B cell (primary cell): ENCODE measurements at regions of chr1 and their contacts with region 1.

Region 1: DNA sequence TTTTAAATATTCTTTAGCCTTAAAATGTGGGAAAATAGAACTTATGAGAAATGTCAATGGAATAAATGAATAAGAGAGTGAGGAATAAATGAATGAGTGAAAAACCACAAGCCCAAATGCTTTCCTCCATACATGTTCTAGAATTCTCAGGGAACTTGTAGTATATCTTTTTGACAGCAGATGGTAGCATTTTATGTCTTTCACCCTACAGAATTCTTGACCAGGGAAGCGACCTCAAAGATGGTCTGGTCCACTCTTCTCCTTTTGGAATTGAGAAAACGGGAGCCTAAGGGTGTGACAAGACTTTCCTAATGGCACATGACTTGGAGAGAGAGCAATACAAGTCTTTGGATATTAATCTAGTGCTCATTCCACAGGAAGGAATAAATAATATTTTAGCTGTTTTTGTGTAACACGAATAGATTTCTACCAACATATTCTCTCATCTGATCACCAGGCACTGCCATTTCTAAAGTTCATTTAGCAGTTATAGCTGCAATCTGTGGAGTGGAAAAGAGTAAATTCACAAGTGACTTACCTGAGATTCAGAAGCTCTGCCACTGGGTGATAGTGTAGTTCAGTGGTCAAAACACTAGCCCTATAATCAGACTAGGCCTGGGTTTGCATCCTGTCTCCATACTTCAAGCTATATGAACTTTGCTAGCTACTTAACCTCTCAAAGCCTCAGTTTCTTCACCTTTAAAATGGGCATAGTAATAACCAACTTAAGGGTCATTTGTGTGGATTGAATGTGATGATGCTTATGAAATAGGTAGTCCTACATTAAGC is 15.0 kb upstream of the F5 start:
- DNase-seq: peak; percentile 61
- ATAC-seq: no peak
- H3K4me3 ChIP-seq: no peak overlapping the region
- H3K4me3 Mint-ChIP-seq: peak overlapping the region; percentile 20
- H3K27ac ChIP-seq: peak overlapping the region in 1 of 2 donors; percentile 62
- H3K27ac Mint-ChIP-seq: peak overlapping the region; percentile 77
- H3K4me1 ChIP-seq: peaks cover 39 to 40% of the 10 kb centered on the region in 2 donors
- H3K4me1 Mint-ChIP-seq: peaks cover 42% of the 10 kb centered on the region
- H3K27me3 ChIP-seq: no peaks in the 10 kb centered on the region
- H3K27me3 Mint-ChIP-seq: no peaks in the 10 kb centered on the region
- CTCF ChIP-seq: peak; percentile 70

Region 2: GRCh38 chr1:169517586-169518192 is 83.6 kb before region 1 on chr1:
- CTCF ChIA-PET with region 1: no interaction called
- POLR2A ChIA-PET with region 1: no interaction called
- intact Hi-C with region 1: no loop called
- DNase-seq: no peak
- ATAC-seq: no peak
- H3K4me3 ChIP-seq: no peak overlapping the region
- H3K4me3 Mint-ChIP-seq: no peak overlapping the region
- H3K27ac ChIP-seq: no peak overlapping the region
- H3K27ac Mint-ChIP-seq: no peak overlapping the region
- H3K4me1 ChIP-seq: no peaks in the 10 kb centered on the region
- H3K4me1 Mint-ChIP-seq: no peaks in the 10 kb centered on the region
- H3K27me3 ChIP-seq: no peaks in the 10 kb centered on the region
- H3K27me3 Mint-ChIP-seq: no peaks in the 10 kb centered on the region
- CTCF ChIP-seq: no peak

Region 3: GRCh38 chr1:169546087-169546995 is 54.9 kb before region 1 on chr1:
- CTCF ChIA-PET with region 1: interaction called, 39 read pairs
- POLR2A ChIA-PET with region 1: no interaction called
- intact Hi-C with region 1: loop called (anchors 1 kb)
- DNase-seq: peak; percentile 81
- ATAC-seq: peak; percentile 82
- H3K4me3 ChIP-seq: no peak overlapping the region
- H3K4me3 Mint-ChIP-seq: no peak overlapping the region
- H3K27ac ChIP-seq: no peak overlapping the region
- H3K27ac Mint-ChIP-seq: no peak overlapping the region
- H3K4me1 ChIP-seq: no peaks in the 10 kb centered on the region
- H3K4me1 Mint-ChIP-seq: no peaks in the 10 kb centered on the region
- H3K27me3 ChIP-seq: no peaks in the 10 kb centered on the region
- H3K27me3 Mint-ChIP-seq: peaks cover 13% of the 10 kb centered on the region
- CTCF ChIP-seq: peak; percentile 78

Region 4: GRCh38 chr1:169618367-169618766 is 17.1 kb after region 1 on chr1:
- CTCF ChIA-PET with region 1: interaction called, 52 read pairs
- POLR2A ChIA-PET with region 1: no interaction called
- intact Hi-C with region 1: no loop called
- DNase-seq: no peak
- ATAC-seq: no peak
- H3K4me3 ChIP-seq: no peak overlapping the region
- H3K4me3 Mint-ChIP-seq: no peak overlapping the region
- H3K27ac ChIP-seq: no peak overlapping the region
- H3K27ac Mint-ChIP-seq: no peak overlapping the region
- H3K4me1 ChIP-seq: no peaks in the 10 kb centered on the region
- H3K4me1 Mint-ChIP-seq: peaks cover 2% of the 10 kb centered on the region
- H3K27me3 ChIP-seq: no peaks in the 10 kb centered on the region
- H3K27me3 Mint-ChIP-seq: no peaks in the 10 kb centered on the region
- CTCF ChIP-seq: no peak

Region 5: GRCh38 chr1:169634145-169634544 is 32.9 kb after region 1 on chr1:
- CTCF ChIA-PET with region 1: interaction called, 11 read pairs
- POLR2A ChIA-PET with region 1: no interaction called
- intact Hi-C with region 1: no loop called
- DNase-seq: no peak
- ATAC-seq: no peak
- H3K4me3 ChIP-seq: no peak overlapping the region
- H3K4me3 Mint-ChIP-seq: no peak overlapping the region
- H3K27ac ChIP-seq: no peak overlapping the region
- H3K27ac Mint-ChIP-seq: no peak overlapping the region
- H3K4me1 ChIP-seq: no peaks in the 10 kb centered on the region
- H3K4me1 Mint-ChIP-seq: no peaks in the 10 kb centered on the region
- H3K27me3 ChIP-seq: no peaks in the 10 kb centered on the region
- H3K27me3 Mint-ChIP-seq: no peaks in the 10 kb centered on the region
- CTCF ChIP-seq: no peak

Region 6: GRCh38 chr1:169650551-169650950 is 49.3 kb after region 1 on chr1:
- CTCF ChIA-PET with region 1: interaction called, 8 read pairs
- POLR2A ChIA-PET with region 1: interaction called, 3 read pairs
- intact Hi-C with region 1: loop called (anchors 5 kb)
- DNase-seq: no peak
- ATAC-seq: no peak
- H3K4me3 ChIP-seq: no peak overlapping the region
- H3K4me3 Mint-ChIP-seq: no peak overlapping the region
- H3K27ac ChIP-seq: no peak overlapping the region
- H3K27ac Mint-ChIP-seq: no peak overlapping the region
- H3K4me1 ChIP-seq: peaks cover 4 to 7% of the 10 kb centered on the region in 2 donors
- H3K4me1 Mint-ChIP-seq: peaks cover 25% of the 10 kb centered on the region
- H3K27me3 ChIP-seq: no peaks in the 10 kb centered on the region
- H3K27me3 Mint-ChIP-seq: no peaks in the 10 kb centered on the region
- CTCF ChIP-seq: no peak

Region 7: DNA sequence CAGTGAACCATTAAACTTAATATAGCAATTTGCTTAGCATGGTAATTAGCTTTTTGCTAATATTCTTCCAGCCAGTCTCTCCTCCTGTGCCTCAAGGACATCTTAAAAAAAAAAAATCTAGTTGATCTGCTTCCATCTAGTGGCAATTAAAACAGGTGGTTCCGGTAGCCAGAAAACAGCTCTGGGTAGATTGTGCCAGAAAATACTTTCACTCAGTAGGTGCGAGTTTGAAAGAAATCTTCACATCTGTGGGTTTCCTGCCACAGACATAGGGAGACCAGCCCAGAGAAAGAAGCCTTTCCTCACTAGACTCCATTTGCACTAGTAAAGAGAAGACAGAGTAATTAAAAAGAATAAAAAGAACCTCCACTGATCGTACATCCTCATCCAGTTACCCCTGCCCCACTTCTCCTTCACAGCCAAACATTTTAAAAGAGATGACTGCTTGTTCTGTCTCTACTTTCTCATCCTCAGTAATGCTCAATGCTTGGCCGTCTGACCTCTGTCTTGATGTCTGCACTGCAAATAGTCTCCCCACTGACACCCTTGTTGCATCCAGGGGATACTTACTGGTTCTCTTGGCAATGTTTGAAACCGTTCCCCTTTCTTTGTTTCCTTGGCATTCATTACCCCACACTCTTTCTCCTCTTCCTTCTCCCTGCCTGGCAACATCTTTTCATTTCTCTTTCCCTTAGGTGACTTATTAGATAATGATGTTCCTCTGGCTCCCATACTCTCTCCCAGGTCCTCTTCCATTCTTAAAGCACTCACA is 93.2 kb after region 1 on chr1:
- CTCF ChIA-PET with region 1: interaction called, 240 read pairs
- POLR2A ChIA-PET with region 1: interaction called, 14 read pairs
- intact Hi-C with region 1: loop called (anchors 1 kb)
- DNase-seq: peak; percentile 59
- ATAC-seq: peak; percentile 20
- H3K4me3 ChIP-seq: peak overlapping the region in 1 of 5 experiments; percentile 37
- H3K4me3 Mint-ChIP-seq: peak overlapping the region; percentile 54
- H3K27ac ChIP-seq: peak overlapping the region; percentile 87 to 88
- H3K27ac Mint-ChIP-seq: peak overlapping the region; percentile 90
- H3K4me1 ChIP-seq: peaks cover 98 to 99% of the 10 kb centered on the region in 2 donors
- H3K4me1 Mint-ChIP-seq: peaks cover 95% of the 10 kb centered on the region
- H3K27me3 ChIP-seq: no peaks in the 10 kb centered on the region
- H3K27me3 Mint-ChIP-seq: no peaks in the 10 kb centered on the region
- CTCF ChIP-seq: peak; percentile 25

Region 8: DNA sequence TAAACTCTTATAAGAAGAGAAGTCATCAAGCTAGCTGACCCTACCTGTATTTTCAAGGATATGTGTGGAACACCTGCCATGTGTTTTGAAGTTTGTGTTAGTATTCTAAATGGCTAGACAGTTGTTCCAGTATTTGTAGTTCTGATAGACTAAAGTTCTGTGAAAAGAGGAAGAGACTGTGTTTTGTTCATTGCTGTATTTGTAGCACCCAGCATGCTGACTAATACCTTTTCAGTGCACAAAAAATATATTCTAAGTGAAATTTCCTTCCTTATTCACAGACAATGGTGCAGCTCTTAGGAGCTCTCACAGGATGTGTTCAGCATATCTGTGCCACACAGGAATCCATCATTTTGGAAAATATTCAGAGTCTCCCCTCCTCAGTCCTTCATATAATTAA is 201.6 kb after region 1 on chr1:
- CTCF ChIA-PET with region 1: interaction called, 13 read pairs
- POLR2A ChIA-PET with region 1: no interaction called
- intact Hi-C with region 1: no loop called
- DNase-seq: no peak
- ATAC-seq: no peak
- H3K4me3 ChIP-seq: no peak overlapping the region
- H3K4me3 Mint-ChIP-seq: no peak overlapping the region
- H3K27ac ChIP-seq: no peak overlapping the region
- H3K27ac Mint-ChIP-seq: no peak overlapping the region
- H3K4me1 ChIP-seq: no peaks in the 10 kb centered on the region
- H3K4me1 Mint-ChIP-seq: no peaks in the 10 kb centered on the region
- H3K27me3 ChIP-seq: no peaks in the 10 kb centered on the region
- H3K27me3 Mint-ChIP-seq: no peaks in the 10 kb centered on the region
- CTCF ChIP-seq: no peak